ENCODE measurements at regions of chr1 and their contacts with region 1.

Region 1: GRCh38 chr1:88180449-88181108 is 503.5 kb upstream of the PKN2 start:
- DNase-seq: peak; percentile 68
- ATAC-seq: peak; percentile 90
- H3K4me3 Mint-ChIP-seq: no peak overlapping the region
- H3K27ac Mint-ChIP-seq: no peak overlapping the region
- H3K4me1 Mint-ChIP-seq: no peaks in the 10 kb centered on the region
- H3K27me3 Mint-ChIP-seq: peaks cover 2% of the 10 kb centered on the region
- CTCF ChIP-seq: peak; percentile 66

Region 2: GRCh38 chr1:88193426-88193825 is 12.8 kb after region 1 on chr1:
- CTCF ChIA-PET with region 1: interaction called, 13 read pairs
- POLR2A ChIA-PET with region 1: no interaction called
- intact Hi-C with region 1: no loop called
- DNase-seq: no peak
- ATAC-seq: no peak
- H3K4me3 Mint-ChIP-seq: no peak overlapping the region
- H3K27ac Mint-ChIP-seq: no peak overlapping the region
- H3K4me1 Mint-ChIP-seq: no peaks in the 10 kb centered on the region
- H3K27me3 Mint-ChIP-seq: peaks cover 2% of the 10 kb centered on the region
- CTCF ChIP-seq: no peak

Region 3: DNA sequence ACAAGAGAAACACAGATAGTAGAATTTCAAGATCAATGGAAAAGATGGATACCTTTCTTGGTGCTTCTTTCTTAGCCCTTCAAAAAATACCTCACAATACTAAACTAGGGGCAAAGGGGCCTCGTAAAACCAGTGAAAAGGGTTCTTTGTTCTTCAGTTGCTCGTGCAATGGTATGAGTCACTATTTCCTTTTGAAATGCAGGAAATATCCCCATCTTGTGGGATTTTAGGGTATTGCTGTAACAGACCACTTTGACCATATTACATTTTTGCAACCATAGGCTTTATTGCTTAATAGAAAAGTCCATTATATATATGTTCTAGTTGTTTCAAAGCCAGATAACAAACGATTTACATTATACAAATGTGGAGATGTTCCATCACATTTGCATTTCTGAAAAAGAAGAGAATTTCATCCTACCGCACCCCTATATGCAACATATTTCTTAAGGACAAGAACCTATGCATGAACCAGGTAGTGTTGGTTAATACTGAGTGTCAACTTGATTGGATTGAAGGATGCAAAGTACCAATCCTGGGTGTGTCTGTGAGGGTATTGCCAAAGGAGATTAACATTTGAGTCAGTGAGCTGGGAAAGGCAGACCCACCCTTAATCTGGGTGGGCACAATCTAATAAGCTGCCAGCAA is 414.9 kb after region 1 on chr1:
- CTCF ChIA-PET with region 1: interaction called, 4 read pairs
- POLR2A ChIA-PET with region 1: no interaction called
- intact Hi-C with region 1: loop called (anchors 5 kb)
- DNase-seq: peak; percentile 4
- ATAC-seq: peak; percentile 83
- H3K4me3 Mint-ChIP-seq: no peak overlapping the region
- H3K27ac Mint-ChIP-seq: no peak overlapping the region
- H3K4me1 Mint-ChIP-seq: peaks cover 3% of the 10 kb centered on the region
- H3K27me3 Mint-ChIP-seq: peaks cover 2% of the 10 kb centered on the region
- CTCF ChIP-seq: peak; percentile 65